PC-3 (cell line): ENCODE measurements at regions of chr18 and their contacts with region 1.

Region 1: DNA sequence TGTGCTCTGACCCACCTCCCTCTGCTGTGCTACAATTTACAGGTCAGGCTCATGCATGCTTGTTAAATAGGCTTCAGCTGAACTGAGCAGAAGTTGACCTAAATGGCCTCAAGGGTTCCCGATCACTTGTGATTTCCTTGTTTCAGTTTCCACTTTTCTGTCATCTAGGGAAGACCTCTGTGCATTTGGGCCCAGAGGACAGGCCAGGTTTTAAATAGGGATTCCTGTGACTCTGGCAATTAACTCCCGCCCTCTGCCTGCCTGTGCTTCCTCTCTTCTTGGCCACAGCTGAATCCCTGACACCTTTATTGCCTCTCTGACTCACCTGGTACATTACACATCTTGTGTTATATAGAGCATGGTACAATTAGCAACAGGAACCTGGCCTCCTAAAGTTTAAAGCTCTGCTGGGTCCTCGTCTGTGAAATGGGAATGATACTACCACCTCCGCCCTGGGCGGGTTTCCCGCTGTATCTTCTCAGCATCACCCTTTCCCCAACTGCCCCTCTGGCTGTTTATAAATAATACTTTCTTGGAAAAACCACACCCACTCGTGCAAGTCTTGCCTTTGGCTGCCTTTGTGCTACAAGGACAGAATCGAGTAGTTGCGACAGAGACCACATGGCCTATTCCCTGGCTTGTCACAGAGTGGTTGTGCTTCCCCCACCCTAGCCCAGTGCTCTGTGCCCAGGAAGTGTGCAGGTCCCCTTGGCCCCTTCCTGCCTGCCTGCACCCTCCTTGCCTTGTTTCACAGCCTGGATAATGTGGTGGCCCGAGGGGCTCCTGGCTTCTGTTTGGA is 7.9 kb downstream of the CABLES1 start:
- DNase-seq: peak; percentile 74
- ATAC-seq: peak; percentile 81
- H3K4me3 ChIP-seq: 0 out of 2 replicates have a peak overlapping the region, but pooled peaks have one; percentile 5
- H3K27ac ChIP-seq: peak overlapping the region; percentile 91
- H3K4me1 ChIP-seq: peaks cover 38% of the 10 kb centered on the region
- H3K27me3 ChIP-seq: no peaks in the 10 kb centered on the region
- CTCF ChIP-seq: no peak

Region 2: GRCh38 chr18:23107718-23108117 is 35.5 kb before region 1 on chr18:
- CTCF ChIA-PET with region 1: no interaction called
- POLR2A ChIA-PET with region 1: interaction called, 18 read pairs
- intact Hi-C with region 1: no loop called
- DNase-seq: no peak
- ATAC-seq: no peak
- H3K4me3 ChIP-seq: no peak overlapping the region
- H3K27ac ChIP-seq: peak overlapping the region; percentile 99
- H3K4me1 ChIP-seq: peaks cover 46% of the 10 kb centered on the region
- H3K27me3 ChIP-seq: no peaks in the 10 kb centered on the region
- CTCF ChIP-seq: no peak

Region 3: DNA sequence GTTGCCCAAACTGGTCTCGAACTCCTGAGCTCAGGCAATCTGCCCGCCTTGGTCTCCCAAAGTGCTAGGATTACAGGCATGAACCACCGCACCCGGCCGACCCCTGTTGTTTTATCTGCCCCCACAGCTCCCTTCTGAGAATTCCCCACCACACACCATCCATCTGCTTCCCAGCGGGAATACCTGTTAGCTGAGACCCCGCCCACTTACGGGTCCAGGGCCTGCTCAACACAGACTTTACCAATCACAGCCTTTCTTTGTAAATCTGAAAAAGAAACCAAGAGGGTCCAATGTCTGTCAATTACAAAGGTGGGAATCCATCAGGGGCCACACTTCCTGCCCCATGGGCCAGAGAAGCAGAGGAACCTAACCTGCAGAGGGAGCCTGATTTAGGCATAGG is 22.1 kb before region 1 on chr18:
- CTCF ChIA-PET with region 1: no interaction called
- POLR2A ChIA-PET with region 1: no interaction called
- intact Hi-C with region 1: no loop called
- DNase-seq: no peak
- ATAC-seq: no peak
- H3K4me3 ChIP-seq: no peak overlapping the region
- H3K27ac ChIP-seq: no peak overlapping the region
- H3K4me1 ChIP-seq: peaks cover 5% of the 10 kb centered on the region
- H3K27me3 ChIP-seq: no peaks in the 10 kb centered on the region
- CTCF ChIP-seq: no peak

Region 4: GRCh38 chr18:23231340-23232021 is 88.3 kb after region 1 on chr18:
- CTCF ChIA-PET with region 1: no interaction called
- POLR2A ChIA-PET with region 1: no interaction called
- intact Hi-C with region 1: loop called (anchors 5 kb)
- DNase-seq: peak; percentile 92
- ATAC-seq: peak; percentile 77
- H3K4me3 ChIP-seq: no peak overlapping the region
- H3K27ac ChIP-seq: peak overlapping the region; percentile 79
- H3K4me1 ChIP-seq: peaks cover 38% of the 10 kb centered on the region
- H3K27me3 ChIP-seq: no peaks in the 10 kb centered on the region
- CTCF ChIP-seq: no peak